ENCODE measurements at regions of chr22 and their contacts with region 1.

Region 1: DNA sequence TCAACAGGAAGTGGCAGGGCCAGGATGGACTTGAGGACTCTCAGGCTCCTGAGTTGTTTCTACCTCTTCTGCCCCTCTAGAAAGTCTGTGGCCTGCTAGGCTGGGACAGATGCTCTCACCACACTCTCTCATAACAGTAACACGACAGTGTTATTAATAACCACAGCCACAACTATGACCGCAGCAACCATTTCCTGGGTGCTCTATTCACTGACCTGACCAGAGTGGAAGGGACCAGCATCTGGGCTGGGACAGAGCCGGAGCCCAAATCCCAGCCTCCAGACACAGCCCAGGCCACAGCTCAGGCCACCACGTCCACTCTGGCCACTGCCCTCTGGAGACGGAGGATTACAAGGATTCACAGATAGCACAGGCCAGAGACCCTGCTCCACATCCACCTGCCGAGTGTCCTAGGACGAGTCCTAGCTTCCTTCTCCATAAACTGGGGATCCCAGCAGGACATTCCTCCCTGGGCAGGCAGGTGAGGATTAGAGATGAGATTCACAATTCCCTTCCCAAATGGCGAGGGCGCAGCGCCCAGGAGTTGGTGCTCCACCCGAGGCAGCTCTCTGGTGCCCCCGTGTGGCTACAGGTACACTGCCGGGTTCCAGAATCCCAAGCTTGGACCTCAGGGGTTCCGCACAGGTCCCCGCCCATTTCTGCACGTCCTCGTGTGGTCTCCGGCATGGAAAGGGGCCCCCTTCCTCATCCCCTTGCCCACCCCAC is 7.0 kb downstream of the PNPLA5 start:
- DNase-seq: peak; percentile 76
- CTCF ChIP-seq: peak; percentile 85

Region 2: DNA sequence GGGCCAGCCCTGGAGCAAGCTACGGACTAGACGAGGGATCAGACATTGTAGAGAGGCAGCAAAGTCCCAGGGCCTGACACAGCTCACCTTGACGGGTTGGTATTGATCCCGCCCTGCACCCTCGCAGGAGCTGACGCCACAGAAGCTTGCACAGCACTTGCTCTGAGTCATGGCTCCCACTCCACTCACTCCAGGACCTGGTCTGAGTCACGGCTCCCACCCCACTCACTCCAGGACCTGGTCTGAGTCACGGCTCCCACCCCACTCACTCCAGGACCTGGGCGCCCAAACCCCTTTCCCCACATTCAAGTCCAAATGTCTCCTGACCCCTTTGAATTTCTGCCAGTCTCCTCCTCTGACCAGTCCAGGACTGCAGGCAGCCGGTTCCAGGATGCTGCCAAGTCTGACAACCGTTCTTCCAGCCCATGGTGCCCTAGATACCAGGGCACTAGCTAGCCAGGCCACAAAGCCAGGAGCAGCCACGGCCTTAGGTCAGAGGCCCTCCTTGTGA is 13.0 kb after region 1 on chr22:
- CTCF ChIA-PET with region 1: interaction called, 85 read pairs
- POLR2A ChIA-PET with region 1: no interaction called
- DNase-seq: no peak
- CTCF ChIP-seq: no peak

Region 3: GRCh38 chr22:43905681-43906080 is 20.9 kb after region 1 on chr22:
- CTCF ChIA-PET with region 1: interaction called, 85 read pairs
- POLR2A ChIA-PET with region 1: no interaction called
- DNase-seq: no peak
- CTCF ChIP-seq: no peak

Region 4: GRCh38 chr22:43945632-43946383 is 61.0 kb after region 1 on chr22:
- CTCF ChIA-PET with region 1: interaction called, 38 read pairs
- POLR2A ChIA-PET with region 1: no interaction called
- DNase-seq: peak; percentile 85
- CTCF ChIP-seq: peak; percentile 90

Region 5: DNA sequence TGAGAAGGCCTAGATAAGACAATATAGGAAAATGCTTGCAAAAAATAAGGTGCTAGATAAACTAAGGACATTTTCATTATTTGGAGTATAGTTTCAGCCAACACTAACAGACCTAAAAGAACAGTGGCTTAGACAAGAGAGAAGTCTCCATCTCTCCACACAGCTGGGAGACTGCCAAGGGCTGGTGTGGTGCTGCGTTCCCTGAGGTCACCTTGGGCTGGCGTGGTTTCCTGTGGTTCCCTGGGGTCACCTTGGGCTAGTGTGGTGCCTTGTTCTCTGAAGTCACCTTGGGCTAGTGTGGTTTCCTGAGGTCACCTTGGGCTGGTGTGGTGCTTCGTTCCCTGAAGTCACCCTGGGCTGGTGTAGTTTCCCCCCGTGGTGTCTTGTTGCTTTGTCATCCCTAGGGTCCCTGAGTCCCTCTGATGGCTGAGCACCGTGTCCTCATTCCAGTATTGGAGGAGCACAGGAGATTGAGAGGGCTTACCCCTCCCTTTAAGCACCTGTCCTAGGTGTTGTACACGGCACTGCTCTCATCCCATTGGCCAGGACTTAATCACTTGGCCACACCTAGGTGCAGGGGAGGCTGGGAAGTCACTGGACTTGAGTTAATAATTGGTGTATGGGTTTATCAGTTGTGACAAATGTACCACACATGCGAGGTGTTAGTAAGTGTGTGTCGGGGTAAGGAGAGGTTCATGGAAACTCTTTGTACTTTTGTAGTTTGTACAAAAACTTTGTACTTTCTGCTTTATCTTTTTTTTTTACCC is 85.4 kb after region 1 on chr22:
- CTCF ChIA-PET with region 1: no interaction called
- POLR2A ChIA-PET with region 1: no interaction called
- DNase-seq: no peak
- CTCF ChIP-seq: no peak

Measured in GM10248 (cell line).